A549 (cell line): ENCODE measurements at regions of chr1 and their contacts with region 1.

Region 1: DNA sequence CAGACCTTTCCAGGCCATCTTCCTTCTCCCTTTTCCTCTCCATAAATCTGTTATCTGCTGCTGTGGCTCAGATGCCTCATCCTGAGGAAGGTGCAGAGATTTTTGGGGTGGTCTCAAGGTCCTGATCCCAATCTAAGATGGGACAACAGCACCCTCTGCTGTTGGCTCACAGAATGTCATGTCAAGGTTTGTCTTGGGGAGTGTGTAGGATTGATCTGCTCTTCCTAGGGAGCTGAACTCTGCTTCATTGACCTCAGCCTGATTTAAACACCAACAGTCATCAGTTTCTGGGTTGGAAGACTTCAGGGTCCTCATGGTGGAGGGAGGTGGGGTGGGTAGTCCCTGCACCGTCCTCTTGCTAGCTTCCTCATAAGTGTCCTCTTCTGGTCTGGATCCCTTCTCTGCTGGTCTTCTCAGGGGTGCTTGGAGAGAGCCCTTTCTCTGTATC is 62.8 kb upstream of the LAX1 start:
- DNase-seq: peak; percentile 57 to 63
- ATAC-seq: peak; percentile 83 to 93
- H3K4me3 ChIP-seq: no peak overlapping the region
- H3K27ac ChIP-seq: no peak overlapping the region
- H3K4me1 ChIP-seq: no peaks in the 10 kb centered on the region
- CTCF ChIP-seq: peak; percentile 98
- EP300 ChIP-seq: no peak
- POLR2A ChIP-seq: no peak
- RAD21 ChIP-seq: peak; percentile 98 to 99

Region 2: DNA sequence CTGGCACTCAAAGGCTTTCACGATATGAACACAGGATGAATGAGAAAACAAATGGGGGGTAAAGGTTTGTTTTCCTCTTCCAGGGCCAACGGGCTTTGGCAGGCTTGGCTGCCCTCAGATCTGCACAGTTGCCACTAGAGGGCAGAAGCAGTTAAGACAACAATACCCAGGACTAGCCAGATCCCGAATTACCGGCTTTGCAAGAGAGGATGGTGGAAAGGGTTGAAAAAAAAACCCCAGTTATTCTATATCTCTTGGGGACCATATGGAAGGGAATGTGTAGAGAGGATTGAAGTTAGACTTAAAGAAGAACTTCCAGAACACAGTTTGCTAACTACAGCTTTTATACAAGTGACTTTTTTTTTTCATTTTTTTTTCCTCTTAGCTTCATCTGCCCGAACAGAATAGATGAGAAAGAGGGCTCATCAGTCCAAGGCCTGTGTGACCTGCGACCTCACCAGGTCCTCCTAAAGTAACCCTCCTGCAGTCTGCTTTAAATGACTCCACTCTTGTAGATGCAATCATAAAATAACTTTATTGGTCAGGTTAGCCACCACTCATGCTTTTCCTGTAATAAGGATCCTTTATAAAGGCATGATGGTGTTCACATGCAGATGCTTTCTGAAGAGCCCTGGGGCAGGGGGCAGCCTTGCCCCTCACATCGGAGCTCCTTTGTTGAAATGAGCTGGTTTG is 361.9 kb before region 1 on chr1:
- CTCF ChIA-PET with region 1: interaction called, 121 read pairs
- POLR2A ChIA-PET with region 1: no interaction called
- DNase-seq: peak; percentile 79 to 92
- ATAC-seq: peak; percentile 79 to 89; a peak in 5 of 6 replicates
- H3K4me3 ChIP-seq: no peak overlapping the region
- H3K27ac ChIP-seq: no peak overlapping the region
- H3K4me1 ChIP-seq: no peaks in the 10 kb centered on the region
- CTCF ChIP-seq: peak; percentile 90
- EP300 ChIP-seq: no peak
- POLR2A ChIP-seq: no peak
- RAD21 ChIP-seq: peak; percentile 89 to 91

Region 3: GRCh38 chr1:203497269-203497777 is 204.8 kb before region 1 on chr1:
- CTCF ChIA-PET with region 1: interaction called, 343 read pairs
- POLR2A ChIA-PET with region 1: no interaction called
- DNase-seq: no peak
- ATAC-seq: no peak
- H3K4me3 ChIP-seq: no peak overlapping the region
- H3K27ac ChIP-seq: no peak overlapping the region
- H3K4me1 ChIP-seq: no peaks in the 10 kb centered on the region
- CTCF ChIP-seq: no peak
- EP300 ChIP-seq: no peak
- POLR2A ChIP-seq: no peak
- RAD21 ChIP-seq: no peak

Region 4: DNA sequence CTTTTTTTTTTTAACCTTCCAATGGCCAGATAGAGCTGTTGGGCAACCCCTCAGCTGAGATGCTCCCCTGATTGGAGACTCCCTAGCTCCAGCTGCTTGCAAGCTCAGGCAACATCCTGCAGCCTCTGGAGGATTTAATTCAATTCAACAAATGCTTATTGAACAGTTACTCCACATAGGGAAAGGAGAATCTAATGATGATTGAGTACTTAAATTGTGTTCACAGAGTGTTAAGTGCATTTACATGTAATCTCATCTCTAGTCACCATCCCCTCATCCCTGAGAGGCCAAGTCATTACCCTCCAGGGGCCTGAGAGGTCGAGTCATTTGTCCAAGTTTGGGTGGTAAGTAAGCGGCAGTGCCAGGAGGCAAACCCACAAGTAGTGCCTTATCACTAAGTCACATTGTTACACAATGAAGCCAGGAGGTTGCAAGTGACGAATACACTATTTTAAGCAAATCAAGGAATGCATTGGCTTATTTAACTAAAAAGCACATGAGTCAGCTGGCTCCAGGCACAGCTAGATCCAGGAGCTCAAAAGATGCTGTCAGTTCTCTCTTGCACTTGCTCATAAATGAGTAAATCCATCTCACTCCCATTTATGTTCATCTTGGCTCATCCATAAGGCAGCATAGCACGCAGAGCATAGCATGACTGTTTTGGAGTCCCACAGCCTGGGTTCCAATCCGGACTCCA is 143.9 kb before region 1 on chr1:
- CTCF ChIA-PET with region 1: interaction called, 12 read pairs
- POLR2A ChIA-PET with region 1: no interaction called
- DNase-seq: peak; percentile 65 to 76
- ATAC-seq: peak; percentile 82 to 89
- H3K4me3 ChIP-seq: no peak overlapping the region
- H3K27ac ChIP-seq: peak overlapping the region; percentile 59 to 80
- H3K4me1 ChIP-seq: peaks cover 40% of the 10 kb centered on the region
- CTCF ChIP-seq: no peak
- EP300 ChIP-seq: peak; percentile 59 to 74; a peak in 2 of 5 replicates
- POLR2A ChIP-seq: no peak
- RAD21 ChIP-seq: peak; percentile 8 to 48; a peak in 1 of 5 replicates

Region 5: GRCh38 chr1:203593723-203594122 is 108.4 kb before region 1 on chr1:
- CTCF ChIA-PET with region 1: interaction called, 20 read pairs
- POLR2A ChIA-PET with region 1: no interaction called
- DNase-seq: peak; percentile 40 to 46
- ATAC-seq: peak; percentile 62 to 86; a peak in 5 of 6 replicates
- H3K4me3 ChIP-seq: no peak overlapping the region
- H3K27ac ChIP-seq: no peak overlapping the region
- H3K4me1 ChIP-seq: peaks cover 13% of the 10 kb centered on the region; the same call in 2 of the 3 replicates
- CTCF ChIP-seq: no peak
- EP300 ChIP-seq: no peak
- POLR2A ChIP-seq: no peak
- RAD21 ChIP-seq: peak in 1 of 2 experiments; percentile 45; a peak in 2 of 5 replicates

Region 6: GRCh38 chr1:203625628-203626019 is 76.5 kb before region 1 on chr1:
- CTCF ChIA-PET with region 1: interaction called, 34 read pairs
- POLR2A ChIA-PET with region 1: no interaction called
- DNase-seq: peak in 1 of 2 experiments; percentile 58
- ATAC-seq: peak; percentile 11 to 30; a peak in 4 of 6 replicates
- H3K4me3 ChIP-seq: no peak overlapping the region
- H3K27ac ChIP-seq: peak overlapping the region; percentile 79 to 92
- H3K4me1 ChIP-seq: peaks cover 28% of the 10 kb centered on the region
- CTCF ChIP-seq: peak; percentile 42
- EP300 ChIP-seq: no peak
- POLR2A ChIP-seq: no peak
- RAD21 ChIP-seq: peak; percentile 64 to 71

Region 7: GRCh38 chr1:203682473-203683383 is 19.4 kb before region 1 on chr1:
- CTCF ChIA-PET with region 1: interaction called, 85 read pairs
- POLR2A ChIA-PET with region 1: no interaction called
- DNase-seq: peak in 1 of 2 experiments; percentile 36
- ATAC-seq: no peak
- H3K4me3 ChIP-seq: no peak overlapping the region
- H3K27ac ChIP-seq: no peak overlapping the region
- H3K4me1 ChIP-seq: peaks cover 7% of the 10 kb centered on the region; the same call in 2 of the 3 replicates
- CTCF ChIP-seq: no peak
- EP300 ChIP-seq: no peak
- POLR2A ChIP-seq: no peak
- RAD21 ChIP-seq: no peak